ENCODE measurements at regions of chr1 and their contacts with region 1.

Region 1: GRCh38 chr1:17405898-17406759 is 33.3 kb downstream of the RCC2 start:
- DNase-seq: no peak
- H3K4me3 ChIP-seq: no peak overlapping the region
- CTCF ChIP-seq: peak; percentile 88

Region 2: GRCh38 chr1:17059739-17060460 is 346.2 kb before region 1 on chr1:
- CTCF ChIA-PET with region 1: interaction called, 56 read pairs
- POLR2A ChIA-PET with region 1: no interaction called
- DNase-seq: no peak
- H3K4me3 ChIP-seq: no peak overlapping the region
- CTCF ChIP-seq: peak; percentile 93

Region 3: DNA sequence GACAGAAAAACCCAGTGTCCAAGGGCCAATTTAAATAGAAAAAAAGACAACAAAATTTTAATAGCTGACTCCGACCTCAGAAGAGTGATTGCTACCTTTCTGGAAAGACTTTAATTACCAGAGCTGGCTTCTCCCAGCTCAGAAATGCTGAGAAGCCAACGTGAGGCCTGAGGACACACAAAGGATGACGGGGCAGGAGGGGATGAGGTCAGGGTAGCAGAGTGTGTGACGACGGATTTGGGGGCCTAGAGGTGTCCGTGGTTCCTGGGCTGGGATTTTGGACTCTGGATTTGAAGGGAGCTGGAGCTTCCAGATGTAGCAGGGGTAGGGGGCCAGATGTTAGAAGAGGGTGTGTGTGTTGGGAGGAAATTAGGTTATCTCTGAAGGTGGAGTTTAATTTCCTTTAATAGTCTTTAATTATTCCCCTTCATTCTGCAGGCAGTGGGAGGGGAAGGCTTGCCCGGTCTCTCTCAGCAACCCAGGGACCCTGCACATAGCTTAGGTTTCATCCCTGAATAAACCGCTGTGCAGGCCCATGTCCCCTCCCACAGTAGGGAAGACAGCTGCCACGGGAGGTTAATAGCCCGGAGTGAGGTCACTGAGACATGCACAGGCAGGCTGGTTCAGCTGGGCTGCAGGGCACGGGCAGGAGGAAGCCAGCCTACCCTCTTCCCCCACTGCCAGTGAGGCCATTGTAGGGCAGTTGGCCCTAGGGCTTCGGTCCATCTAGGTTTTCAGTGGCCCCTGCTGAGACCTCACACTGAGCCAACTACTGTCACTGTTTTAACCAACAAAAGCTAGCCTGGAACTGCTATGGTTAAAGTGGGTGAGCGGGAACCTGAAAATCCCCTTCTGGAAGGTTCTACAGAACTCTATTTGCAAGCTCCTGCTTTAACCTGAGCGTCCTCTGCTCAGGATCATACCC is 161.1 kb before region 1 on chr1:
- CTCF ChIA-PET with region 1: interaction called, 11 read pairs
- POLR2A ChIA-PET with region 1: no interaction called
- DNase-seq: no peak
- H3K4me3 ChIP-seq: no peak overlapping the region
- CTCF ChIP-seq: no peak

Region 4: GRCh38 chr1:17335821-17336710 is 70.1 kb before region 1 on chr1:
- CTCF ChIA-PET with region 1: interaction called, 23 read pairs
- POLR2A ChIA-PET with region 1: no interaction called
- DNase-seq: no peak
- H3K4me3 ChIP-seq: no peak overlapping the region
- CTCF ChIP-seq: peak; percentile 88

Region 5: DNA sequence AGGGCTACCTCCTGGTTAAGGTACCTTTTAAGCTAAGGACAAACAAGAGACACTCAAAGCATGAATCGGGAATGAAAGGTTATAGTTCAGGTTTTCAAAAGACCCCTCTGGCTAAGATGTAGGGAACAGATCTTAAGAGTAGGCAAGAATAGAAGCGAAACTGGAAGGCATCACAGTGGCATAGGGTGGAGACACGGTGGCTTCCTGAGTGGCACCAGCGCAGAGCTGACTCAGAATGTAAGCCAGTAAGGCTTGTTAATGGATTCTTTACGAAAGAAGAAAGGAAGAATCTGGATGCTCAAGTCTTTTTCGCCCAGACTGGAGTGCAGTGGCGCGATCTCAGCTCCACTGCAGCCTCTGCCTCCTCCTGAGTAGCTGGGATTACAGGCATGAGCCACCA is 12.9 kb before region 1 on chr1:
- CTCF ChIA-PET with region 1: interaction called, 22 read pairs
- POLR2A ChIA-PET with region 1: no interaction called
- DNase-seq: no peak
- H3K4me3 ChIP-seq: no peak overlapping the region
- CTCF ChIP-seq: no peak

Region 6: DNA sequence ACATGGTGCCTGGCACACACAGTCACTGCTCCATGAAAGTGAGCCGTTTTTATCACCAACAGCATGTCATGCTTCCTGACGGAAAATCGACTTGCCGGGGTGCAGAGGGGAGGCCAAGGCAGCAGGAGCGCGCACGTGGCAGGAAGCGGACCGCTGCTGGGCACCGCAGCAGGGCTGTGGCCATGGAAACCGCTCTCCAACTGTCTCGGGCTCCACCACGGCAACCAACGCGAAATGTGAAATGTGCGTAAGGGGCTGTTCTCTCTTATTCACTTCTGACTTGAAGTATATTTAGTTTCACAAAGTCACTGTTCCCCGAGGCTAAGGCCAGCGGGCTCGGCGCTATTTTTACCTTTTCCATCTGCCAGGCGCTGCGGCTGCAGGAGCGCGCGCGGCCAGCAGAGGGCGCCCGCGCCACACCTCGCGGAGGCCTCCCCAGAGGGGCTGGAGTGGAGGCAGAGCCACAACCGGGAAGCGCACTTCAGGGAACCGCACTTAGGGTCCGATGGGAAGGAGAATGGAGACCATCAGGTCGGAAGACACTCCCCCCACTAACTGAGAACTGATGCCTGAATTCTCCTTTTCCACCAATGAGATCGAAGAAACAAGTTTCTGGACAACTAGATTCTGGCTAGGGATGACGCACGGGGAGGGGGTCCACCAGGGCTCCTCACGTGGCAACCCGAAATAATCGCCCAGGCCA is 13.6 kb after region 1 on chr1:
- CTCF ChIA-PET with region 1: interaction called, 10 read pairs
- POLR2A ChIA-PET with region 1: no interaction called
- DNase-seq: no peak
- H3K4me3 ChIP-seq: no peak overlapping the region
- CTCF ChIP-seq: peak; percentile 98

Measured in AG04449 (cell line).